Heart left ventricle (tissue), 16 donors: ENCODE measurements at regions of chr2 and their contacts with region 1.

Region 1: DNA sequence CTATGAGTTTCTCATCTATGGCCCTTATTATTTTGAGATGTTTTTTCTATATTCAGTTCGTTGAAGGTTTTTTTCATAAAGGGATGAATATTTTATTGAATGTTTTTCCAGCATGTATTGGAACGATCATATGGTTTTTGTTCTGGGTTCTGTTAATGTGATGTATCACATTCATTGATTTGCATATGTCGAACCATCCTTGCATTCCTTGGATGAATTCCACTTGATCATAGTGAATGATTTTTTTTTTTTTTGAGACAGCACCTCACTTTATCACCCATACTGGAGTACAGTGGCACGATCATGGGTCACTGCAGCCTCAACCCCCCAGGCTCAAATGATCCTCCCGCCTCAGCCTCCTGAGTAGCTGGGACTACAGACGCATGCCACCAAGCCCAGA is 5.5 kb upstream of the NEMP2 start:
- DNase-seq: no peak
- ATAC-seq: no peak
- H3K4me3 ChIP-seq: no peak overlapping the region
- H3K27ac ChIP-seq: no peak overlapping the region
- H3K4me1 ChIP-seq: peaks cover 0 to 11% (median 3%) of the 10 kb centered on the region in 12 donors
- H3K27me3 ChIP-seq: no peaks in the 10 kb centered on the region
- CTCF ChIP-seq: no peak
- POLR2A ChIP-seq: no peak

Region 2: DNA sequence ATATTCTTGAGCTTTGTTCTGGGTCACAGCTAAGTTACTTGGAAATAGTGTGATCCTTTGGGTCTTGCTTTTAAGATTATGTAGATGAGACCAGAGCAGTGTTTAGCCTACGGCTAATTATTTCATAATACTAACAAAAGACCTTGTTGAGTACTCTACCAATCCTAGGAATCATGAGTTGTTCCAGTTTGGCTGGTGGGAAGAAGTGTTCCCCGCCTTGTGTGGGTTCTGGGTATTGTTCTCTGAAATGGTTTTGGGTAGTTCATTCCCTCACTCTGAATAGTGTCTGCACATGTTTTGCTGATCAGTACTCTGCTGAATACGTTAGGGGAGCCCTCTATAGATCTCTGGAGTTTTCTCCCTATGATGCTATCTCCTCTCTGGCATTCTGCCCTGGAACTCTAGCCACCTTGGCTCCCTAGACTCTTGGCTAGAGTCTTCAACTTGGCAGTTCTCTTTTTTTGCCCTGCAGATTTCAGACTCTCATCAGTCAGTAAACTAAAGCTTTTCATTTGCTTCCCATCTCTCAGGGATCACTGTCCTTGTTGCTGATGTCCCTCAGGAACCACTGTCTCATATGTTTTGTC is 53.9 kb before region 1 on chr2:
- intact Hi-C with region 1: no loop called
- DNase-seq: no peak
- ATAC-seq: peak in 2 of 4 donors; percentile 18 to 33
- H3K4me3 ChIP-seq: no peak overlapping the region
- H3K27ac ChIP-seq: peak overlapping the region in 4 of 12 donors; percentile 13 to 48 (median 15)
- H3K4me1 ChIP-seq: peaks cover 0 to 21% (median 9%) of the 10 kb centered on the region in 12 donors
- H3K27me3 ChIP-seq: no peaks in the 10 kb centered on the region
- CTCF ChIP-seq: peak in 1 of 12 donors; percentile 6
- POLR2A ChIP-seq: no peak

Region 3: GRCh38 chr2:190563646-190564045 is 23.6 kb after region 1 on chr2:
- intact Hi-C with region 1: no loop called
- DNase-seq: no peak
- ATAC-seq: peak in 1 of 4 donors; percentile 18
- H3K4me3 ChIP-seq: no peak overlapping the region
- H3K27ac ChIP-seq: no peak overlapping the region
- H3K4me1 ChIP-seq: peaks cover 0 to 16% (median 0%) of the 10 kb centered on the region in 12 donors
- H3K27me3 ChIP-seq: no peaks in the 10 kb centered on the region
- CTCF ChIP-seq: no peak
- POLR2A ChIP-seq: no peak

Region 4: GRCh38 chr2:190578158-190579057 is 38.4 kb after region 1 on chr2:
- intact Hi-C with region 1: loop called in 7 of 10 experiments (anchors 2 to 5 kb)
- DNase-seq: peak in 4 of 5 donors; percentile 36 to 56 (median 50)
- ATAC-seq: peak; percentile 71 to 82 (median 76)
- H3K4me3 ChIP-seq: peak overlapping the region in 2 of 12 donors; percentile 1 to 4
- H3K27ac ChIP-seq: peak overlapping the region in 11 of 12 donors; percentile 26 to 68 (median 57)
- H3K4me1 ChIP-seq: peaks cover 0 to 61% (median 33%) of the 10 kb centered on the region in 12 donors
- H3K27me3 ChIP-seq: no peaks in the 10 kb centered on the region
- CTCF ChIP-seq: peak in 2 of 12 donors; percentile 6 to 10
- POLR2A ChIP-seq: no peak